Cardiac septum (tissue), 1 donor: ENCODE measurements at regions of chr11 and their contacts with region 1.

Region 1: GRCh38 chr11:17077520-17078401 is at the start of gene RPS13:
- DNase-seq: peak; percentile 99
- total RNA-seq, gene RPS13: 522 TPM

Region 2: GRCh38 chr11:17276236-17277023 is 198.7 kb after region 1 on chr11 and contains the start of gene NUCB2:
- intact Hi-C with region 1: loop called (anchors 5 kb)
- DNase-seq: peak; percentile 99
- total RNA-seq, gene NUCB2: 91.6 TPM